ENCODE measurements at regions of chr9 and their contacts with region 1.

Region 1: GRCh38 chr9:89984214-89984613 is 379.4 kb downstream of the GADD45G start:
- DNase-seq: no peak
- H3K4me3 Mint-ChIP-seq: peak overlapping the region; percentile 33
- H3K27ac Mint-ChIP-seq: peak overlapping the region; percentile 88
- H3K4me1 Mint-ChIP-seq: peaks cover 49% of the 10 kb centered on the region
- H3K27me3 Mint-ChIP-seq: peaks cover 17% of the 10 kb centered on the region

Region 2: DNA sequence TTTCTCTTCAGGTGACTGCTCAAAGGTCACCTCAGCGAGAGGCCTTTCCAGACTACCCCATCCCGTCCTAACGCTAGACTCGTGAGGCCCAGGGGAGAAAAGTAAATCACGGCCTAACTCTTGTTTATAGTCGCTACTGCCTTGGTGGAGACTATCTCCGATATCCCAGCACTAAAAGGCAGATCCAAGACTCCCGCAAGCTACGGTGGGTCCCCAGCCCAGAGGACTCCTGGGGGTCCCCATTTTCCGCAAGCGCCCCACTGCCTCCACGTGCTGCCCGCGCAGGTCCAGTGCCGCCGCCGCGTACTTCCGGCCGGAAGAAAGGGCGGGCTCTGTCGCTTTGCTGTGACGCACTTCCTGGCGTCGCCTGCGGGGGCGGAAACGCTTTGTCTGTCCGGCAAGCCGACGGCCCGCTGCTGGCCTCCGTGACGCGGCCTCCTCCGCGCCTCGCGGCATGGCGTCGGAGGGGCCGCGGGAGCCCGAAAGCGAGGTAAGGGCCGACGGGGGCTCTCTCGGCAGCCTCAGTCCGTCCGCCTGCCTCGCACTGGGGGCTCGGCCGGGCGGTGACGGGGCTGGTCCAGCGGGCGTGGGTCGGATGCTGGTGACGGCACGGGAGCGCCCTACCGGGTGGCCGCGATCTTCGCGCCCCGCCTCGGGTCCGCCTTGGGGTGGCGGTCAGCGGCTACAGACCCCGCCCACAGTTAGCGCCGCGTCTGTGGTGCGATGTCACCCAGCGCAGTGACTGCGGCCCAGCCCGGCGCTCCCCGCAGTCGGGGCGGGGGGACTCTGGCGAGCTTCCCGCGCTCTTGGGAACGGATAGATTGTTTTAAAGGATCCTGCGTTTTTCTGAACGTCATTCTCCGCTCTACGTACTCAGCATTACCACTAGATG is 665.8 kb before region 1 on chr9 and contains the start of gene SECISBP2:
- CTCF ChIA-PET with region 1: no interaction called
- intact Hi-C with region 1: loop called (anchors 10 kb)
- DNase-seq: peak; percentile 95
- H3K4me3 Mint-ChIP-seq: peak within 1 kb of the TSS; percentile 89
- H3K27ac Mint-ChIP-seq: peak within 1 kb of the TSS; percentile 93
- H3K4me1 Mint-ChIP-seq: peaks cover 79% of the 10 kb centered on the region
- H3K27me3 Mint-ChIP-seq: no peaks in the 10 kb centered on the region
- total RNA-seq, gene SECISBP2: 42.8 to 45.8 TPM

Region 3: DNA sequence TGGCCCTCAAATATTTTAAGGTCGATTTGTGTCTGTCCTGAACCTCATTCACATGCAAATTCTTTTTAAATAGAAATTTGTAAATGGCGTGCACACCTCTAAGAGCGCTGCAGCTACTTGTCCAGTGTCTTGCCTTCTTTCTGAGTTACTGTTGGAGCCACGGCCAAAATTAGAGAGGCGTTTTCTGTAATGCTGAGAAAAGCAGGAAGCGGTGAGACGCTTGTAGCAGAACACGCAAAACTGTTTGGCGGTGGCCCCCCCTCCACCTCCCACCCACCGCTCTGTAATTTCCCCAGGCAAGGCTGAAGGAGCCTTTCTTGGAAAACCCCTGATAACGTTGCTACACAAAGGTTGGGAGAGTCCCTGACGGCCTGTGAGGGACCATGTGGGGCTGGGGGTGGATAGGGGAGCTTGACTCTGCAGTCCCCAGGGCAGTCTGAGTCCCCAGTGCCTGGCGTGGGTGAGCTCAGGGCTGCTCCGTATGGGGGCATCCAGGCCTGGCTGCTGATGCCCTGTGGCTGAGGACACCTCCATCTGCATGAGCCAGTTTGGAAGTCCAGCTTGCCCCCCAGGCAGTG is 282.9 kb before region 1 on chr9:
- CTCF ChIA-PET with region 1: no interaction called
- intact Hi-C with region 1: loop called (anchors 2 kb)
- DNase-seq: peak; percentile 93
- H3K4me3 Mint-ChIP-seq: peak overlapping the region; percentile 50
- H3K27ac Mint-ChIP-seq: peak overlapping the region; percentile 85
- H3K4me1 Mint-ChIP-seq: peaks cover 30% of the 10 kb centered on the region
- H3K27me3 Mint-ChIP-seq: no peaks in the 10 kb centered on the region

Region 4: DNA sequence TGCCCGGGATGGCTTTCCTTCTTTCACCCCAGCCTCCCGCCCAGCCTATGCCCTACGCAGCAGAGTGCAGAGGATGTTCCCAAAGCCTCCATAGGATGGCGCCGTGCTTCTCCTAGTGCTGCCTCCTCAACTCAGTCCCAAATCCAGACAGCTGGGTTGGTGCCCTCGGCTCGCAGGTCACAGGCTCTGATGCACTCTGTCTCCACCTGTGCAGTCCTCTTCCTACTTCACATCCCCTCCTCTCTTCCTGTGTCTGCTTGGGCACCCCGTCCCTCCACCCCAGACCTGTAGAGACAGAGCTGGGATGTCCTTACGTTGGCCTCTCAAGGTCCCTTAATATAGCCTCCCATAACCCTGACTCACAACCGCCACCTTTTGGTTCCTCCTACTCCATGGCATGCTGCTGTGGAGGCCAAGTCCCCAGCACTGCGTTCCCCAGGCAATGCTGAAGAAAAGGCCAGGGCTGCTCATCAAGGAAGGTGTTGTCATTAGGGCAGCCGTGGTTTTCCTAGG is 65.0 kb before region 1 on chr9:
- CTCF ChIA-PET with region 1: interaction called, 3 read pairs
- intact Hi-C with region 1: loop called (anchors 5 kb)
- DNase-seq: peak; percentile 73
- H3K4me3 Mint-ChIP-seq: no peak overlapping the region
- H3K27ac Mint-ChIP-seq: no peak overlapping the region
- H3K4me1 Mint-ChIP-seq: peaks cover 14% of the 10 kb centered on the region
- H3K27me3 Mint-ChIP-seq: peaks cover 2% of the 10 kb centered on the region

Region 5: GRCh38 chr9:89999534-90000370 is 15.5 kb after region 1 on chr9:
- CTCF ChIA-PET with region 1: interaction called, 5 read pairs
- intact Hi-C with region 1: loop called (anchors 1 kb)
- DNase-seq: peak; percentile 86
- H3K4me3 Mint-ChIP-seq: peak overlapping the region; percentile 47
- H3K27ac Mint-ChIP-seq: peak overlapping the region; percentile 72
- H3K4me1 Mint-ChIP-seq: peaks cover 26% of the 10 kb centered on the region
- H3K27me3 Mint-ChIP-seq: no peaks in the 10 kb centered on the region

Measured in activated naive CD4-positive, alpha-beta T cell treated with anti-CD3 and anti-CD28 coated beads for 36 hours (primary cell).